ENCODE measurements at regions of chr16 and their contacts with region 1.

Region 1: GRCh38 chr16:67480833-67481560 is at the start of gene ATP6V0D1:
- DNase-seq: peak; percentile 90
- ATAC-seq: peak; percentile 97
- H3K4me3 ChIP-seq: peak within 1 kb of the TSS; percentile 80 to 95
- H3K27ac ChIP-seq: peak within 1 kb of the TSS; percentile 91
- H3K4me1 ChIP-seq: peaks cover 5% of the 10 kb centered on the region; the same call in 1 of the 2 replicates
- H3K27me3 ChIP-seq: no peaks in the 10 kb centered on the region
- CTCF ChIP-seq: peak; percentile 92
- total RNA-seq, gene ATP6V0D1: 70.8 TPM

Region 2: GRCh38 chr16:67438824-67439460 is 42.1 kb before region 1 on chr16:
- CTCF ChIA-PET with region 1: interaction called, 14 read pairs
- POLR2A ChIA-PET with region 1: no interaction called
- in situ Hi-C with region 1: no loop called
- intact Hi-C with region 1: no loop called
- DNase-seq: no peak
- ATAC-seq: no peak
- H3K4me3 ChIP-seq: no peak overlapping the region
- H3K27ac ChIP-seq: no peak overlapping the region
- H3K4me1 ChIP-seq: no peaks in the 10 kb centered on the region
- H3K27me3 ChIP-seq: no peaks in the 10 kb centered on the region
- CTCF ChIP-seq: no peak